ENCODE measurements at regions of chr15 and their contacts with region 1.

Region 1: DNA sequence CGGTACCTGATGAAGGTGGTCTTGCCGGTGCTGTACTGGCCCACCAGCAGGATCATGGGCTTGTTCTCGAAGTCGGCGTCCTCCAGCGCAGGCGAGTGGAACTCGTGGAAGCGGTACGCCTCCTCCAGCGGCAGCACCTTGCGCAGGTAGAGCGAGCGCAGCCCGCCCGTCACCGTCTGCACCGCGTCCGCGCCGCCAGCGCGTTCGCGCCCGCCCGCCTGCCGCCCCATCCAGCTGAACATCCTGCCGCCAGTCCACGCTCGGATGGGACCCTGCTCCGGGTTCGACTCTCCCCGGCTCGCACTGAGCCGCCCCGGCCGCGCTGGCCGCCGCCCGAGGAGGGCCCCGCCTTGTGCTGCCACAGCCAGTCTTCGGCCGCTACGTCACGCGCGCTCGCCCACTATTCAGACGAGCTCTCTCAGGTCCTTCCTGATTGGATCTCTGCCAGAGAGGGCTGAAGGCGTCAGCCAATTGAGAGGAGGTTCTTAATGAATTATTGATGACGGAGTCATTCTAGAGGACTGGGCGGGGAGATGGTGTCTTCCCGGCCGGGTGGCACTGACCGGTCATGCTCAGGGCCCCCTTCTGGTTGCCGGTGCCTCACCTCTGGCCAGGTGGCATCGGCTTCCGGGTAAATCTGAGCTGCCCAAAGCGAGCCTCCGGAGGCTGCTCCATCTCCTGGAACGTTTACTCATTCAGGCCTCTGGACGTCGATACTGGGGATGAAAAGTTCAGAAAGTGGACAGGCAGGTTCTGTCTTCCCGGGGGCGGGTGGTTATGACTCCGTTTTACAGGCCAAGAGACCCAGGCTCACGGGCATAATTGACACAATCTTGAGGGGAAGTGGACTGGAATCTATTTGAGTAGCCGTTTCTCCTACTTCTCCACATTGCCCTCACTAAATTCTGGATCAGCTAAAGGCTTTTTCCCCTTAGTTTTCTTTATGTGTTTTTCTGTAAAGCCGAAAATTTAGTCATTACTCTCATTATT is at the start of gene EHD4:
- DNase-seq: peak; percentile 97
- H3K4me3 Mint-ChIP-seq: peak within 1 kb of the TSS; percentile 88
- H3K27ac Mint-ChIP-seq: peak within 1 kb of the TSS; percentile 93
- H3K4me1 Mint-ChIP-seq: peaks cover 42% of the 10 kb centered on the region
- H3K27me3 Mint-ChIP-seq: peaks cover 8% of the 10 kb centered on the region
- total RNA-seq, gene EHD4: 30.1 to 31.8 TPM

Region 2: DNA sequence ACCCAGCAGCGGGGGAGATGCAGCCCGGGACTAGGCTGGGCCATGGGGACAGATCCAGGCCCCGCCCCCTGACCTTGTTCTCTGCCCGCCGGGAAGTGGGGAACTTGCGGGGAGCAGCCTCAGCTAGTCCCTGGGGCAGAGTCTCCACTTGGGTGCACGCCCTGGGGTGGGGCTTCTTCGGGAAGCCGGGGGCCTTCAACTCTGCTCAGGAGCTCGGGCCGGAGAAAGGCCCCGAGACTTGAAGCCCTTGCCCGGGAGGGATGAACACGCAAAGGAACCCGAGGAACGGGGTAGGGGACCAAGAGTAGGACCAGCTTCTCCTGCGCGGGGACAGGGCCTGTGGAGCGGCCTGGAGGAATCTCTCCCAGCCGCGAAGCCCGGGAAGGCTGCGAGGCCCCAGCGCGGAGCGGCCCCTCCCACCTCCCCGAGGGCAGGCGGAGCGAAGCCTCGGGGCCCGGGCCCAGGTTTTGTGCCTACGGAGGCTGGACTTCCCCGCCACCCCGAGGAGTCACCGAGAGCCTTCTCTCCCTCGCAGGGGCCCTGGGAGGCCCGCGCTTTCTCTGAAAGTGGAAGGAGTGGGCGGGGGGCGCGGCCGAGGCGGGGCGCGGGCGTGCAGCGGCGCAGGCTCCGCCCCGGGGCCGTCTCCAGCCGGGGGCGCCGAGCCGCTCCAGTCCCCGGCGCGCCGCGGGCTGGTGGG is 479.2 kb before region 1 on chr15 and contains the start of gene ITPKA:
- CTCF ChIA-PET with region 1: no interaction called
- intact Hi-C with region 1: loop called (anchors 1 kb)
- DNase-seq: peak; percentile 95
- H3K4me3 Mint-ChIP-seq: peak within 1 kb of the TSS; percentile 59
- H3K27ac Mint-ChIP-seq: peak within 1 kb of the TSS; percentile 3
- H3K4me1 Mint-ChIP-seq: peaks cover 32% of the 10 kb centered on the region
- H3K27me3 Mint-ChIP-seq: peaks cover 38% of the 10 kb centered on the region
- total RNA-seq, gene ITPKA: 1.0 to 1.7 TPM

Region 3: DNA sequence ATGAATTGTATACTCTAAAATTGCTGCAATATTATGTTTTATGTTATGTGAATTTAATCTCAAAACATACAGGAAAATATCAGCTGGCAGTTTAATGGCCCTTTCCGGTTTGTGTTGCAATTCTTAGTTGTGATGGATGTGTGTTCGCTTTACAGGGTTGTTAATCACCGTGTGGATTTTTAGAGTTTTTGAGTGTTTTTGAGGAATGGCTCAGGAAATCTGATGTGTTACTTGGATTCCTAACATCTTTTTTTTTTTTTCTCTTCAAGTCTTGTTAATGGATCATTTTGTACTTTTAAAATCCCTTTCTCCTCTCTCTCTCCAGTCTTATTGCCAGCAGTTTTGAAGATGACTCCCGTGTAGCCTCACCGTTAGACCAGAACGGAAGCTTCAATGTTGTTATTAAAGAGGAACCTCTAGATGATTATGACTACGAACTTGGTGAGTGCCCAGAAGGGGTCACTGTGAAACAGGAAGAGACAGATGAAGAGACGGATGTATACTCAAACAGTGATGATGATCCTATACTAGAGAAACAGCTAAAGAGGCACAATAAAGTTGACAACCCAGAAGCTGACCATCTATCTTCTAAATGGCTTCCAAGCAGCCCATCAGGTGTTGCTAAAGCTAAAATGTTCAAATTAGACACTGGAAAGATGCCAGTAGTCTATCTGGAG is 276.7 kb before region 1 on chr15:
- CTCF ChIA-PET with region 1: interaction called, 3 read pairs
- intact Hi-C with region 1: loop called (anchors 1 kb)
- DNase-seq: peak; percentile 78
- H3K4me3 Mint-ChIP-seq: peak overlapping the region; percentile 22
- H3K27ac Mint-ChIP-seq: peak overlapping the region; percentile 76
- H3K4me1 Mint-ChIP-seq: peaks cover 48% of the 10 kb centered on the region
- H3K27me3 Mint-ChIP-seq: no peaks in the 10 kb centered on the region

Region 4: GRCh38 chr15:41950489-41950888 is 22.1 kb before region 1 on chr15:
- CTCF ChIA-PET with region 1: no interaction called
- intact Hi-C with region 1: no loop called
- DNase-seq: no peak
- H3K4me3 Mint-ChIP-seq: no peak overlapping the region
- H3K27ac Mint-ChIP-seq: no peak overlapping the region
- H3K4me1 Mint-ChIP-seq: no peaks in the 10 kb centered on the region
- H3K27me3 Mint-ChIP-seq: no peaks in the 10 kb centered on the region

Region 5: GRCh38 chr15:42010434-42010833 is 37.9 kb after region 1 on chr15:
- CTCF ChIA-PET with region 1: no interaction called
- intact Hi-C with region 1: loop called (anchors 1 kb)
- DNase-seq: peak; percentile 61
- H3K4me3 Mint-ChIP-seq: no peak overlapping the region
- H3K27ac Mint-ChIP-seq: peak overlapping the region; percentile 38
- H3K4me1 Mint-ChIP-seq: peaks cover 25% of the 10 kb centered on the region
- H3K27me3 Mint-ChIP-seq: no peaks in the 10 kb centered on the region

Region 6: GRCh38 chr15:42194502-42194901 is 222.0 kb after region 1 on chr15:
- CTCF ChIA-PET with region 1: no interaction called
- intact Hi-C with region 1: loop called (anchors 1 kb)
- DNase-seq: peak; percentile 71
- H3K4me3 Mint-ChIP-seq: no peak overlapping the region
- H3K27ac Mint-ChIP-seq: peak overlapping the region; percentile 94
- H3K4me1 Mint-ChIP-seq: peaks cover 63% of the 10 kb centered on the region
- H3K27me3 Mint-ChIP-seq: no peaks in the 10 kb centered on the region

Measured in activated naive CD4-positive, alpha-beta T cell treated with anti-CD3 and anti-CD28 coated beads for 36 hours (primary cell).